ENCODE measurements at regions of chr11 and their contacts with region 1.

Region 1: DNA sequence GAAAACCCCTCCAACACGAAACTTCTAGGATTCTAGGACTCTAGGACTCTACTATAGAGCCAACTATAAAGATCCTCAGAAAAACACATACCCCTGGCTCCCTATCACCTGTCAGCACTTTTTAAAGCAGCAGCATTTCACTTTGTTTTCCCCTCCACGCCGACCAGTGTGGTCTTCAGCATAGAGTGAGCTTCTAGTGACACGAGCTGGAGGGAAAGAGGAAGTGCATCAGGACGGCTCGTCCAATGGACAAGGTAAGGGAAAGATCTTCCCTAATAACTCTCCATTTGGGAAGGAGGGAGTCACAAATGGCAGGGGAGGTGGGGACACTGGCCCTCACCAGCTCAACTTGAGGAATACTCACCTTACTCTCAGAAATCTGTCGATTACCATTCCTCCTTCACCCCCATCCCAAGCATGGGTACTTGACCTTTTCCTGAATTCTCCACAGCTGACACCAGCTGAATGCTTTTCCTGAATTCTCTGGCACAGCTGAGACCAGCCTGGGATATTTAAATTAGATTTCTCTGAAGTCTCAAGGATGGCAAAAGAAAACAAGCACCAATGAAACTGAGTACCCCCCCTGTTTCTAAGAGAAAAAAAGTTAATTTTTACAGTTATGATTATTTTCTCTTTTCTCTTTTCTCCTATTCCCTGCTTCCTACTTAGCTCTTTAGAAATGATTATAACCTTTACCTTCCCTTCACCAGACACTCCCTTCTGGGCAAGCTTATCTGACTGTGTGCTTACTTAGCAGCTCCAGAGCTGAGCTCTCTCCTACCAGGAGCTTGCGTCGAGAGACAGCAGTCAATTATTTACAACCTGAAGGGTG is 33.3 kb upstream of the NNMT start:
- DNase-seq: peak in 4 of 14 experiments; percentile 10 to 58 (median 44)
- ATAC-seq: peak; percentile 52
- H3K4me3 ChIP-seq: no peak overlapping the region
- H3K4me3 Mint-ChIP-seq: no peak overlapping the region
- H3K27ac ChIP-seq: no peak overlapping the region
- H3K27ac Mint-ChIP-seq: no peak overlapping the region
- H3K4me1 ChIP-seq: peaks cover 5% of the 10 kb centered on the region
- H3K4me1 Mint-ChIP-seq: no peaks in the 10 kb centered on the region
- H3K27me3 ChIP-seq: peaks cover 3 to 11% of the 10 kb centered on the region in 2 experiments
- H3K27me3 Mint-ChIP-seq: peaks cover 15% of the 10 kb centered on the region
- CTCF ChIP-seq: peak; percentile 36

Region 2: DNA sequence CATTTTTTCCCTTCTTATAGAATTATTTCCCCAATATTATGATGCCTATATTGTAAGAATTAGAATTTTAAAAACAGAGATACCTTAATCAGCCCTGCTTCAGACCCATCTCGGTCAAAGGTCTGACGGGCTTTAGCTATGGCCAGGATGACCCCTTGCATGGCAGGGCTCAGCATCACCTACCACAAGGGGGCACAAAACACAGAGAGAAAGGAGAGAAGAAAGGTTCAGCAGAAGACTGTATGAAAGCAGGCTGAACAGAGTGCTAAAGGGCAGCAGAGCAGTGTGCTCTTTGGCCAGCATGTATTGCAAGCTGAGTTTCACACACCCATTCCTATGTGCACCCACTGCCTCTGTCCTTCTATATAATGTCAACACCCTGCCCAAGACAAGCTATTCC is 456.5 kb before region 1 on chr11:
- CTCF ChIA-PET with region 1: no interaction called
- POLR2A ChIA-PET with region 1: no interaction called
- intact Hi-C with region 1: loop called in 1 of 2 experiments (anchors 5 kb)
- DNase-seq: peak in 1 of 14 experiments; percentile 4
- ATAC-seq: no peak
- H3K4me3 ChIP-seq: no peak overlapping the region
- H3K4me3 Mint-ChIP-seq: no peak overlapping the region
- H3K27ac ChIP-seq: no peak overlapping the region
- H3K27ac Mint-ChIP-seq: no peak overlapping the region
- H3K4me1 ChIP-seq: no peaks in the 10 kb centered on the region
- H3K4me1 Mint-ChIP-seq: no peaks in the 10 kb centered on the region
- H3K27me3 ChIP-seq: no peaks in the 10 kb centered on the region
- H3K27me3 Mint-ChIP-seq: no peaks in the 10 kb centered on the region
- CTCF ChIP-seq: peak; percentile 22

Region 3: GRCh38 chr11:113994077-113994954 is 268.6 kb before region 1 on chr11:
- CTCF ChIA-PET with region 1: interaction called, 28 read pairs
- POLR2A ChIA-PET with region 1: interaction called, 11 read pairs
- intact Hi-C with region 1: loop called (anchors 1 kb)
- DNase-seq: peak; percentile 8 to 61 (median 28)
- ATAC-seq: no peak
- H3K4me3 ChIP-seq: no peak overlapping the region
- H3K4me3 Mint-ChIP-seq: no peak overlapping the region
- H3K27ac ChIP-seq: no peak overlapping the region
- H3K27ac Mint-ChIP-seq: no peak overlapping the region
- H3K4me1 ChIP-seq: peaks cover 8% of the 10 kb centered on the region
- H3K4me1 Mint-ChIP-seq: no peaks in the 10 kb centered on the region
- H3K27me3 ChIP-seq: peaks cover 8 to 11% of the 10 kb centered on the region in 2 experiments
- H3K27me3 Mint-ChIP-seq: peaks cover 35% of the 10 kb centered on the region
- CTCF ChIP-seq: peak; percentile 77

Region 4: DNA sequence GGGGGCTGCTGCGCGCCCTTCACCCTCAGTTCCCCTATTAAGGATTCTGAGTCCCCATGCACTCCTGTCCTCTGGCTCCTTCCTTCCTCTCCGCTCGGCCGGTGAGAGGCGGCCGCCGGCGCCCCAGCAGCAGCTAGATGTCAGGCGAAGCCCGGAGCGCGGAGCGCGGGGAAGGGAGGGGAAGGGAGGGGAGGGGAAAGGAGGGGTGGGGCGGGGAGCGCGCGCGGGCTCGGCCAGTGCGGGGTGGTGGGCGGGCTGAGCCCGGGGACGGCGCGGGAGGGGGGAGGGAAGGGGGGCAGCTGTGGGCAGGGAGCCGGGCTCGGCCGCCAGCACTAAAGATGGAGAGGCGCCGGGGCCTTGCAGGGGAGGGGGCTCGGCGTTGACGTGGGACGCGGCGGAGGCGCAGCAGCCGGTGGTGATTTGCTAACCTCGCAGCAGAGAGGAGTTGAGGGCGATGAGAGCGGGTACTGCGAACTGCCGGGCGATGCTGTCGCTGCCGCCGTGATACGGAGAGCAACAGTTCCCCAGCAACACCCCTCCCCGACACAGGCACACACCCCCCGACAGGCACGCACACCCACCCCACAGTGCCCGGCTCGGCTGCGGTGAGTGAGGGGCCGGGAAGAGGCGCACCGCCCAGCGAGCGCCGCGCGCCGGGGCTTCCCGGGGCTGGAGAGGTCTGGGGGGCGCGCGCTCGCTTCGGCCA is 203.5 kb before region 1 on chr11 and contains the start of gene ZBTB16:
- CTCF ChIA-PET with region 1: interaction called, 10 read pairs
- POLR2A ChIA-PET with region 1: interaction called, 3 read pairs
- intact Hi-C with region 1: no loop called
- DNase-seq: peak; percentile 34 to 84 (median 56)
- ATAC-seq: peak; percentile 73
- H3K4me3 ChIP-seq: peak within 1 kb of the TSS; percentile 67
- H3K4me3 Mint-ChIP-seq: peak within 1 kb of the TSS; percentile 95
- H3K27ac ChIP-seq: peak within 1 kb of the TSS in 1 of 2 donors; percentile 21
- H3K27ac Mint-ChIP-seq: peak within 1 kb of the TSS; percentile 64
- H3K4me1 ChIP-seq: peaks cover 33% of the 10 kb centered on the region
- H3K4me1 Mint-ChIP-seq: peaks cover 9% of the 10 kb centered on the region
- H3K27me3 ChIP-seq: peaks cover 25 to 28% of the 10 kb centered on the region in 2 experiments
- H3K27me3 Mint-ChIP-seq: peaks cover 51% of the 10 kb centered on the region
- CTCF ChIP-seq: peak; percentile 23
- total RNA-seq, gene ZBTB16: 19.1 to 20.6 TPM

Region 5: GRCh38 chr11:114197799-114198500 is 64.9 kb before region 1 on chr11:
- CTCF ChIA-PET with region 1: interaction called, 5 read pairs
- POLR2A ChIA-PET with region 1: no interaction called
- intact Hi-C with region 1: loop called in 1 of 2 experiments (anchors 5 kb)
- DNase-seq: no peak
- ATAC-seq: no peak
- H3K4me3 ChIP-seq: no peak overlapping the region
- H3K4me3 Mint-ChIP-seq: no peak overlapping the region
- H3K27ac ChIP-seq: no peak overlapping the region
- H3K27ac Mint-ChIP-seq: no peak overlapping the region
- H3K4me1 ChIP-seq: peaks cover 15% of the 10 kb centered on the region
- H3K4me1 Mint-ChIP-seq: peaks cover 38% of the 10 kb centered on the region
- H3K27me3 ChIP-seq: no peaks in the 10 kb centered on the region
- H3K27me3 Mint-ChIP-seq: no peaks in the 10 kb centered on the region
- CTCF ChIP-seq: no peak

Region 6: DNA sequence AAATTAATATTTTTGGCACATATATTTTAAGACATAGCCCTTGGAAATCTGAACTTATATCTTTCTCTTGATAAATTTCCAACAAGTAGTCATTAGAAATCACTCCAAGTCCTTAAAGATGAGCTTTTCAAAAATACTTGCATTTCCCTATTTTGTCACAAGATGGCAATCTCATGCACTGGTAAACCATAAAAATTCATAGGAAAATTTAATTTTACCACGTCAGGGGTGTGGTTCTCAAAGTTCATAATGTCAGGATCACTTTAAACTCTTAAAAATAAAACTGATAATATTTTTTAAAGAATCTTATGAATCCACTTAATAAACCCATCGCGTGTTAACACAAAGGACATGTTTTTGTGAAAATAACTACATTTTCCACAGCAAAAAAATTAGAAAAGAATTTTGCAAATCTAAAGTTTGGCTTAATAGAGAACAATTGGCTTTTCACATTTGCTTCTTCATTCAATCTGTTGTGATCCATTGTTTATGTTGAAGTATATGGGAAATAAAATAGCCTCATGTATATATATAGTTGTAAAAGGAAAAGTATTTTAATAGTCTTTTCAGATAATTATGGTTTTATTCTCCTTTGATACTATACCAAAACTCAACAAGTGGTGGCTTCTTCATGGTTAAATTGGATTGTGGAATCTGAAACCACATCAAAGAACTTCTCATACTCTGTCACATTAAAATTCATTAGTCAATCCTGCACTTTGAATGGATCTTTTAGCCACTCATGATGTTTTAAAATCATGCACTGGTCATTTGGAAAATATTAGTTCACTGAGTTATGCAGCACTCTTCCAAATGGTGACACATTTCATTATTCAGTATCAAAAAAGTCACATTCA is 1072.3 kb after region 1 on chr11:
- CTCF ChIA-PET with region 1: no interaction called
- POLR2A ChIA-PET with region 1: no interaction called
- intact Hi-C with region 1: no loop called
- DNase-seq: peak in 3 of 14 experiments; percentile 10 to 28 (median 25)
- ATAC-seq: no peak
- H3K4me3 ChIP-seq: no peak overlapping the region
- H3K4me3 Mint-ChIP-seq: no peak overlapping the region
- H3K27ac ChIP-seq: no peak overlapping the region
- H3K27ac Mint-ChIP-seq: no peak overlapping the region
- H3K4me1 ChIP-seq: no peaks in the 10 kb centered on the region
- H3K4me1 Mint-ChIP-seq: no peaks in the 10 kb centered on the region
- H3K27me3 ChIP-seq: no peaks in the 10 kb centered on the region
- H3K27me3 Mint-ChIP-seq: no peaks in the 10 kb centered on the region
- CTCF ChIP-seq: peak; percentile 51